Lower leg skin (tissue), 4 donors: ENCODE measurements at regions of chr18 and their contacts with region 1.

Region 1: DNA sequence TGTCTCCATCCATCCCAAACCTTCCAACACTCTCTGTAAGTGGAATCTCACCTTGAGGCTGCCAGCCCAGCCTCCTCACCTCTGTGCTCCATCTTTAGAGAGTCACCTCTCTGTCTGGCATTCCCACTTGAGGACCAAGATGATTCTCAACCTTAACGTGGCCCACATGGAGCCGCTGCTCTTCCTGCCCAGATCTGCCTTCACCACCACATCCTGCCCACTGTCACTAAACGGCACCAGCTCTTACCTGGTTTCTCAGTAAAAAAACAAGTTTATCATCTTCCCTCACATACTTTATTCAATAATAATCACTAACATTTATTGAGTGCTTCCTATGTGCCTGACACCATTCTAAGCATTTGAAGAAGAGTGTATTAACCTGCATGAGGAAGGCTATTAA is 80.4 kb downstream of the NEDD4L start:
- DNase-seq: no peak
- H3K4me3 ChIP-seq: no peak overlapping the region
- CTCF ChIP-seq: no peak
- POLR2A ChIP-seq: no peak

Region 2: GRCh38 chr18:57881818-57882413 is 242.6 kb before region 1 on chr18:
- intact Hi-C with region 1: loop called (anchors 5 kb)
- DNase-seq: peak; percentile 39 to 89
- H3K4me3 ChIP-seq: no peak overlapping the region
- CTCF ChIP-seq: peak in 1 of 3 donors; percentile 54
- POLR2A ChIP-seq: no peak